Dendritic cell treated with granulocyte-macrophage colony-stimulating factor and Interleukin-4, amounts not matched to agents 40 ng/mL and 50 ng/mL, for 4 days (primary cell): ENCODE measurements at regions of chr6 and their contacts with region 1.

Region 1: GRCh38 chr6:110999634-111000270 is 17.9 kb downstream of the RPF2 start:
- H3K4me3 Mint-ChIP-seq: no peak overlapping the region
- H3K27ac Mint-ChIP-seq: no peak overlapping the region
- H3K4me1 Mint-ChIP-seq: no peaks in the 10 kb centered on the region
- H3K27me3 Mint-ChIP-seq: no peaks in the 10 kb centered on the region

Region 2: GRCh38 chr6:110688661-110689268 is 311.0 kb before region 1 on chr6:
- intact Hi-C with region 1: loop called (anchors 5 kb)
- H3K4me3 Mint-ChIP-seq: peak overlapping the region; percentile 18
- H3K27ac Mint-ChIP-seq: no peak overlapping the region
- H3K4me1 Mint-ChIP-seq: peaks cover 25% of the 10 kb centered on the region
- H3K27me3 Mint-ChIP-seq: no peaks in the 10 kb centered on the region